Body of pancreas (tissue), 4 donors: ENCODE measurements at regions of chr16 and their contacts with region 1.

Region 1: GRCh38 chr16:75385507-75386152 is 47.7 kb downstream of the CFDP1 start:
- DNase-seq: peak in 1 of 4 donors; percentile 40
- ATAC-seq: peak; percentile 78
- H3K4me3 ChIP-seq: no peak overlapping the region
- H3K27ac ChIP-seq: peak overlapping the region in 1 of 4 donors; percentile 11
- H3K4me1 ChIP-seq: peaks cover 4% of the 10 kb centered on the region
- H3K27me3 ChIP-seq: no peaks in the 10 kb centered on the region
- CTCF ChIP-seq: peak; percentile 33 to 85 (median 79)
- POLR2A ChIP-seq: no peak

Region 2: GRCh38 chr16:74795104-74795503 is 590.5 kb before region 1 on chr16:
- intact Hi-C with region 1: no loop called
- DNase-seq: no peak
- ATAC-seq: no peak
- H3K4me3 ChIP-seq: no peak overlapping the region
- H3K27ac ChIP-seq: no peak overlapping the region
- H3K4me1 ChIP-seq: no peaks in the 10 kb centered on the region
- H3K27me3 ChIP-seq: no peaks in the 10 kb centered on the region
- CTCF ChIP-seq: no peak
- POLR2A ChIP-seq: no peak

Region 3: DNA sequence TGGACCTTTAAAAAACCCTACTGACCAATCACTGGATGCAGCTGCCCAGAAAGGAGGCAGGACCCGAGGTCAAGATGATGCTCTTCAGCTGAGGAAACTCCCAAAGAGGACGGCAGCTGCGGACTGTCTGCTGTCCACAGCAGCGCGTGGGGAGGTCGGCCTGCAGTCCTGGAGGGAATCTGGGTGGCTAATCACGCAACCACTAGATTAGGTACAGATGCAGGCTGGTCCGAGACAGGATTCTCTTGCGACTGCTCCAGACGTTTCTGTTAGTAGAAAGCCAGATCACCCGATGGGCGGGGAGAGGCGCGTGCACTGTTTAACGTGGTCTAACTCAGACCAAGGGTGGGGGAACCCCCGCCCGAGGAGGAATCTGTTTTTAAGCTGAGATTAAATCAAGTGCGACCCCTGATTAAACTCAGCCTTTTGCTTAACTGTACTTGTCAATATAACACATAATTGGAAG is 187.5 kb before region 1 on chr16:
- intact Hi-C with region 1: loop called (anchors 5 kb)
- DNase-seq: peak in 3 of 4 donors; percentile 57 to 62 (median 58)
- ATAC-seq: no peak
- H3K4me3 ChIP-seq: no peak overlapping the region
- H3K27ac ChIP-seq: peak overlapping the region in 2 of 4 donors; percentile 24
- H3K4me1 ChIP-seq: no peaks in the 10 kb centered on the region
- H3K27me3 ChIP-seq: no peaks in the 10 kb centered on the region
- CTCF ChIP-seq: no peak
- POLR2A ChIP-seq: peak; percentile 36 to 64 (median 40)

Region 4: DNA sequence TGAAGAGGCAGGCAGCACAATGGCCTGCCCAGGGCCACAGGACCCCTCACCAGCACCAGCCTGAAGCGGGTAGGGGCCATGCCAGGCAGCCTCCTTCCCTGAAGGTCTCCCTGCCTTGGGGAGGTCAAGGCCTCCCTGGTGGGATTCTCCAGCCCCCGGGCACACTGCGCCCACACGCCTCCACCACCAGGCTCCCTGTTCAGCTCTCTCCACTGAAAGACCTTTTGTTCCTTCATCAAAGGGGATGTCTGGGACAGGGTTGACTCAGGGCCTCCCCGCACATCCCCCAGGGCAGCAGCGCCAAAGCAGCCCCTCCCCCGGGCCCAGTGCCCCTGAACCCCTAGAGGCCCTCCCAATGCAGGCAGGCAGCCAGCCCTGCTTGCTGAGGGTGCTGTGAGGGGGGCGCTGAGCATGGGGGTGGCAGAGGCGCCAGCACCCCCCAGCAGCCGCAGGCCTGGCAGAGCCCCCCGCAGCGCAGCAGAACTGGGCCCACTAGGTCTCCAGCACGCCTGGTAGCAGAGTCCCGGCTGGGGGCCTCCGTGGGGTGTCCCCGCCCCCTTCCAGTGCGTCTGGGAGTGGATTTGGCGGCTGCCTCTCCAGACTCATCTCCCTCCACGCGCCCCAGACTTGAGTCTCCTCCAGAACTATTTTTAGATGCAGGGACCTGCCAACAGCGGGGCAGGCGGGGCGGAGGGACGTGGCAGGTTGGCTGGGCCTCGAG is 147.3 kb before region 1 on chr16:
- intact Hi-C with region 1: loop called (anchors 5 kb)
- DNase-seq: peak in 3 of 4 donors; percentile 66 to 84 (median 67)
- ATAC-seq: peak; percentile 31
- H3K4me3 ChIP-seq: no peak overlapping the region
- H3K27ac ChIP-seq: peak overlapping the region; percentile 52 to 71 (median 66)
- H3K4me1 ChIP-seq: peaks cover 51% of the 10 kb centered on the region
- H3K27me3 ChIP-seq: no peaks in the 10 kb centered on the region
- CTCF ChIP-seq: no peak
- POLR2A ChIP-seq: no peak